ENCODE measurements at regions of chr4 and their contacts with region 1.

Region 1: GRCh38 chr4:137819964-137820383 is 287.7 kb upstream of the PCDH18 start:
- DNase-seq: peak; percentile 80
- H3K4me3 Mint-ChIP-seq: no peak overlapping the region
- H3K27ac Mint-ChIP-seq: no peak overlapping the region
- H3K4me1 Mint-ChIP-seq: peaks cover 12% of the 10 kb centered on the region
- H3K27me3 Mint-ChIP-seq: no peaks in the 10 kb centered on the region
- CTCF ChIP-seq: peak; percentile 78

Region 2: DNA sequence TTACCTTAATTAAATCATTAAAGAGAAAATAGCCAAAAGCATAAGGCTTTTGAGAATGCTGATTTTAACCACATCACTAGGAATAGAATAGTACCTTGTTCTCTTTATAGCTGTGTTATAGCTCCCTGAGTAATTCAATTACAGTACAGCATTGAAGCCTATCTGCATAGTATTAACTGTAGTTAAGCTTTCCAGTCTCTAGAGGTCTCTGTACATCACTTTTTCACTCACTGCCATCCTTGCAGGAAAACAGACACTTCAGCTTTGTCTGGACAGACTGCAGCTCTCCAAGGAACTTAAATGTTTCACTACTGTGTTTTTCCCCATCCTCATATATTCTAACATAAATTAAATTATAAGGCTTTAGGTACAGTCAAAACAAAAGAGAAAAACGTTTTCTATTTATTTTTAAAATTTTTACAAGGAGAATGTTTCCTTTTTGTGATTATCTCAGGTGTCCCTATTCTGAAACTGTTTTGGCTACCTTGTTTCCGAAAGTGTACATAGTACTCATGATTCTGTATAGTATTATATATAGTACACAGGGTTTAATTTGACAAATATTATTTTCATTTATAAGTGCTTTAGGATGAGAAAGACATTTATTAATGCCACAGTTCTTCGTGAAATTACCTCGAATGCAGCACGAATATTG is 695.6 kb before region 1 on chr4:
- CTCF ChIA-PET with region 1: interaction called, 8 read pairs
- POLR2A ChIA-PET with region 1: no interaction called
- intact Hi-C with region 1: loop called (anchors 1 kb)
- DNase-seq: peak; percentile 77
- H3K4me3 Mint-ChIP-seq: peak overlapping the region; percentile 72
- H3K27ac Mint-ChIP-seq: peak overlapping the region; percentile 41
- H3K4me1 Mint-ChIP-seq: peaks cover 5% of the 10 kb centered on the region
- H3K27me3 Mint-ChIP-seq: no peaks in the 10 kb centered on the region
- CTCF ChIP-seq: peak; percentile 60

Region 3: DNA sequence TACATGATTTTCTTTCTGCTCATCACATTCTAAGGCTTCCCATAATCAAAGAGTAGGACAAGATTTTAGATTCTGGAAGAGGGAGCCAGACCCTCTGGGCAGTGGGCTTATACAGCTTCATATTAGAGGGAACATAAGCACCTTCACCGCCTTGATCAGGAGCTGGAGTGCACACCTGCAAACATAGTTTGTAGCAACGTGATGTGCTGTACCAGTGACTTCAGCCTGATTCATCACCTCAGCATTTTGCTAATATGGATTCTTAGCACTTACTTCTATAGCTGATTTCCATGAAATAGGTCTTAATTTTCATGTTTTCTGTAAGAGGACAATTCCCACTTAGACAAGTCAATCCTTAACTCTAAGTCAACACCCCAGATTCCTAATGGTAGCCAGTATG is 324.4 kb before region 1 on chr4:
- CTCF ChIA-PET with region 1: no interaction called
- POLR2A ChIA-PET with region 1: no interaction called
- intact Hi-C with region 1: no loop called
- DNase-seq: no peak
- H3K4me3 Mint-ChIP-seq: no peak overlapping the region
- H3K27ac Mint-ChIP-seq: no peak overlapping the region
- H3K4me1 Mint-ChIP-seq: no peaks in the 10 kb centered on the region
- H3K27me3 Mint-ChIP-seq: no peaks in the 10 kb centered on the region
- CTCF ChIP-seq: no peak

Region 4: DNA sequence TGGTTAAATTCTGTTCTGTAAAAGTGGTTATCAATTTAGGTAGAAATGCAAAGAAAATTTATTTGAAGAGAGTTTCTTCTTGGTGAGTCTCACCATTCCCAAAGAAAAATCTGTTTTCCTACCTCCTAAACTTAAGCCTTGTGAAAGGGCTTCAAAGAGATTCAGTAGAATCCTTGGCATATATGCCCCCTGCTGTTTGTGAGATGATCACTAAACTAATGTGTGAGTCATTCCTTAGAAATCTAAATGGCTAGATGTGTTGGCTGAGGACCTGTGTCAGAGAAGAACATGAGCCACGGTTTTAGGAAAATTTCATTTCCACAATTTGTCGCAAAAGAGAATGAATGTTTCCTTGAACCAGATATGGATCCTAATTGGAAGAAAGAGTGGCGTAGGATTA is 161.3 kb after region 1 on chr4:
- CTCF ChIA-PET with region 1: interaction called, 4 read pairs
- POLR2A ChIA-PET with region 1: no interaction called
- intact Hi-C with region 1: loop called (anchors 1 kb)
- DNase-seq: peak; percentile 70
- H3K4me3 Mint-ChIP-seq: no peak overlapping the region
- H3K27ac Mint-ChIP-seq: no peak overlapping the region
- H3K4me1 Mint-ChIP-seq: peaks cover 5% of the 10 kb centered on the region
- H3K27me3 Mint-ChIP-seq: no peaks in the 10 kb centered on the region
- CTCF ChIP-seq: peak; percentile 20

Region 5: GRCh38 chr4:138014590-138015288 is 194.8 kb after region 1 on chr4:
- CTCF ChIA-PET with region 1: interaction called, 10 read pairs
- POLR2A ChIA-PET with region 1: no interaction called
- intact Hi-C with region 1: no loop called
- DNase-seq: no peak
- H3K4me3 Mint-ChIP-seq: no peak overlapping the region
- H3K27ac Mint-ChIP-seq: no peak overlapping the region
- H3K4me1 Mint-ChIP-seq: no peaks in the 10 kb centered on the region
- H3K27me3 Mint-ChIP-seq: no peaks in the 10 kb centered on the region
- CTCF ChIP-seq: no peak

Region 6: DNA sequence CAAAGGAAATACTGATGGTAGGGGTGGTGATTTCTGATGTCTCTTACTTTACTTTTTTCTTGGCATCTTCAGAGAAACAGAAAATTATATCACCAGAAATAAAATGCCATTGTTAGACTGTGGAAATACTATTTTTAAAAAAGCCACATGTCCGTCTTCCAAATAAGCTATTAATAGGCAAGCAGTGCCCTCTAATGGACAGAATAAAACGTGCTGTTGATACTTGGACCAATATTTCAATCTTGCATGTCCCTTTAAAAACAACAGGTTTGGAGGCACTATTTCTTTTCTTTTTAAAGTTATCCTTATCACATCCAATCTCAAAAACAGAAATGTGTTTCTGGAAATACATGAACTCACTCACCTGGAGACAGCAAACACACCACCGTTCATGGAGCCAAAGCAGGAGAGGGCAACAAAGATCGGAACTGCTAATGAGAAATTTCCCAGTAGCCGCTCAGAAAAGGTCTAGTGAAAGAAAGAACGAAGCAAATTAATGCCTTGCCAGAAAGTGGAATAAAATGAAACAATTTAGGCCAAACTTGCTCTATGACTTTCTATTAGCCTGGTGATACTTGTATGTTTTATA is 363.0 kb after region 1 on chr4:
- CTCF ChIA-PET with region 1: interaction called, 8 read pairs
- POLR2A ChIA-PET with region 1: interaction called, 3 read pairs
- intact Hi-C with region 1: loop called (anchors 10 kb)
- DNase-seq: peak; percentile 54
- H3K4me3 Mint-ChIP-seq: no peak overlapping the region
- H3K27ac Mint-ChIP-seq: no peak overlapping the region
- H3K4me1 Mint-ChIP-seq: peaks cover 5% of the 10 kb centered on the region
- H3K27me3 Mint-ChIP-seq: no peaks in the 10 kb centered on the region
- CTCF ChIP-seq: peak; percentile 39

Region 7: DNA sequence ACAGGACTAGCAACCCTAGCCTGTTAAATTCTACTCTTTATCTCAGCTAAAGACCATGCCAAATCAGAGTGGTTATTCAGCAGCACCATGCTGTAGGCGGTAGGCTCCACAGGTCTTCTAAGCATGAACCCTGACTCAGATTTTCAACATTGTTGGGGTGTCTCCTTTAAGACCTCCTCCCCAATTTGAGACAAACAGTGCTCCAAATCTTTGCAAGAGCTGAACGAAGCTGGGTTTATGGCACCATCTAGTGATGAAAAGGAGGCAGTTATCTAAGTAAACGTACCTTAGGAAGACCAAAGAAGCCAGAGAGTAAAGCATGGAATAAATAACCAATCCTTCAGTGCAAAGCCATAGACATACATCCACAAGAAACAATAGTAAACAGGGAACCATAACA is 756.7 kb after region 1 on chr4:
- CTCF ChIA-PET with region 1: interaction called, 7 read pairs
- POLR2A ChIA-PET with region 1: no interaction called
- intact Hi-C with region 1: loop called (anchors 1 kb)
- DNase-seq: peak; percentile 58
- H3K4me3 Mint-ChIP-seq: no peak overlapping the region
- H3K27ac Mint-ChIP-seq: no peak overlapping the region
- H3K4me1 Mint-ChIP-seq: no peaks in the 10 kb centered on the region
- H3K27me3 Mint-ChIP-seq: no peaks in the 10 kb centered on the region
- CTCF ChIP-seq: peak; percentile 51

Region 8: DNA sequence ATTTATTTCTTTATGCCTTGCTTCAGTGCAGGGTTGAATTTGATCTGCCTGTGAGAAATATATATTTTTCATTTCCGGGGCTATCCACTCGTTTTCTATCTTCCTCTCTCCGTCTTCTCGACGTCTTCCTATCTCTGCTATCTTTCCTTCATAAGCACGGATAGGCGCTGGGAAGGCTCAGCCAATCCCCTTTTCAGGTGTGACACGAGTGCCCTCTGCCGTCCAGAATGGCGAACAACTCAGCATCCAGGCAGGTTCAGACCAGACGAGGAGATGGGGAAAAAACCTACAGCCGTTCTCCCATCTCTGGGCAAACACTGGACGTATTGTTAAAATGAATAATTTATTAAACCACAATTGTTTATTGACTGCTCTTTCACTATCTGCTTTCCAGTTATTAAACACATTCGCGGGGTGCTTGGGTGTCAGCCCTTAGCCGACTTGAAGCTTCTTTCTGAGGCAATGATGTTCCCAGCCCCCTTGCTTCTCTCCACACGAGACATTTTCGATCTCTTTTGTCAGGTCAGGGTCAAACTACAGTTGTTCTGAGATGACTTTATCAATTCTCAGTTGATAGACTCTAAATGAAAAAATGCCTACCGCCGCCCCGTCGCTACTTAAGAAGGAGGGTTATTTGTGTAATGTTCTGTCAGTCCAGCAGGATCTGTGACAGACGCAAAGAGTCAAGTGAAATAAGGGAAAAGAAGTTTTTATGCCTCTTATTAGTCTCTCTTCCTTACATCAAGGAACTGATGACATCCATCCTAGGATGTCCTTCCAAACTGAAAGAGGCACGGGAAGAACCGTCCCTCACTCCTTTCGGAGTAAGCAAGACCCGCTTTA is 1099.3 kb after region 1 on chr4:
- CTCF ChIA-PET with region 1: no interaction called
- POLR2A ChIA-PET with region 1: no interaction called
- intact Hi-C with region 1: loop called (anchors 5 kb)
- DNase-seq: peak; percentile 85
- H3K4me3 Mint-ChIP-seq: no peak overlapping the region
- H3K27ac Mint-ChIP-seq: no peak overlapping the region
- H3K4me1 Mint-ChIP-seq: peaks cover 7% of the 10 kb centered on the region
- H3K27me3 Mint-ChIP-seq: no peaks in the 10 kb centered on the region
- CTCF ChIP-seq: peak; percentile 71